ENCODE measurements at regions of chr6 and their contacts with region 1.

Region 1: DNA sequence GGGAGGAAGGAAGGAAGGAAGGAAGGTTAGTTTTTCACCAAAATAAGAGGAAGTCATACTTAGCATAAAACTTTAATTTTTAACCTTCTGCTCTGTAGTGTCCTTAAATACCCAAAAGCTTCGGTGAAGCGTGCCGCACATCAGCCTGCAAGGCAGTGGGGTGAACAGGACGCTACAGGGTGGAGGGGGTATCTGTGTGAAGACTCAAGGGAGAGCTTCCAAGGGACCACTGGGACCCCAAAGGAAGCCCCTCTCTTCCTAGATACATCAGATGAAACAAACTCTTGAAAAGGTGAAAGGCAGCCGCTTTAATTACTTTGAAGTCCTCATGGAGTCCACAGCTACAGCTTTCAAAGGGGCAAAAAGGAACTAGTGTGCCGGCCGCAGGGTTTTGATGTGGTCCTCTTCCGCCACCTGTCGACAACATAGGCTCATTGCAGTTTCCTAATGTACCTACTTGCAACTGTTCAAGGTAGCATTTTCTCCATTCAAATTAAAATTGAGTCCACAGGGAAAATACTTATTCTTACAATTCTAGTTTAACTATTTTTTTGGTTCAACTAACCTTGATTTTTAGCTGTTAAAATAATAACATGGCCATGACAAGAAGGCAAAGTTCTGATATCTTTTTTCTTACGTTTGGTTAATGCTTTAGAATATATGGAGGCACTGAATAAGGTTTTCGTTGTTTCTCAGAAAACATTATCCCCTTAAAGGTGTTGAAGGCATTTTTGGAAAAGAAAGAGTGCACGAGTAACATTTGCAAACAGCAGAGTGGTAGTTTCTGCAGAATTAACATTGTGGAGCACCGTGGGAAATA is 135.0 kb upstream of the RIPOR2 start:
- DNase-seq: peak; percentile 54 to 85 (median 79)
- ATAC-seq: peak; percentile 99
- H3K4me3 ChIP-seq: no peak overlapping the region
- H3K4me3 Mint-ChIP-seq: peak overlapping the region in 8 of 10 donors; percentile 10 to 70 (median 50)
- H3K27ac ChIP-seq: no peak overlapping the region
- H3K27ac Mint-ChIP-seq: peak overlapping the region; percentile 43 to 92 (median 83)
- H3K4me1 ChIP-seq: peaks cover 0 to 3% of the 10 kb centered on the region in 2 donors
- H3K4me1 Mint-ChIP-seq: peaks cover 5 to 15% (median 9%) of the 10 kb centered on the region in 7 donors
- H3K27me3 ChIP-seq: no peaks in the 10 kb centered on the region
- H3K27me3 Mint-ChIP-seq: peaks cover 0 to 7% (median 0%) of the 10 kb centered on the region in 5 donors

Region 2: GRCh38 chr6:23929201-23929600 is 1141.6 kb before region 1 on chr6:
- CTCF ChIA-PET with region 1: no interaction called
- POLR2A ChIA-PET with region 1: no interaction called
- intact Hi-C with region 1: no loop called
- DNase-seq: no peak
- ATAC-seq: no peak
- H3K4me3 ChIP-seq: no peak overlapping the region
- H3K4me3 Mint-ChIP-seq: no peak overlapping the region
- H3K27ac ChIP-seq: no peak overlapping the region
- H3K27ac Mint-ChIP-seq: no peak overlapping the region
- H3K4me1 ChIP-seq: no peaks in the 10 kb centered on the region
- H3K4me1 Mint-ChIP-seq: no peaks in the 10 kb centered on the region
- H3K27me3 ChIP-seq: no peaks in the 10 kb centered on the region
- H3K27me3 Mint-ChIP-seq: no peaks in the 10 kb centered on the region

Region 3: DNA sequence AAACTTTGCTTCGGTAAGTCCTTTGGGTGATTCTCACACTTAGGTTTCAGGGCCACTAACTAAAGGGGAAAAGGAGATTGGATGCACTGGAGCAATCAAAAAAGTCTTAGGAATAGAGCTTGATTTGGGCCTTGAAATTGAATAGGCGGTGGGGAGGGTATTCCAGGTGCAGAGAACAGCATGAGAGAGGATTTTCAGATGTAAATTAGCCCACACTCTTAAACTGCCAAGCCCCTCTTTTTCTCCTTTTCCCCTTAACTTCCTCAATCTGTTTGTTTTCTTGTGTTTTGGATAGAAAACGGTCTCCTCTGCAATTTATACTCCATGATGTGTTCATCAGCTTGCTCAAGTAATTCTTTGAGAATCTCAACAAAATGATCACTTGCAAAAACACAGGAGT is 72.9 kb before region 1 on chr6:
- CTCF ChIA-PET with region 1: no interaction called
- POLR2A ChIA-PET with region 1: no interaction called
- intact Hi-C with region 1: no loop called
- DNase-seq: no peak
- ATAC-seq: no peak
- H3K4me3 ChIP-seq: no peak overlapping the region
- H3K4me3 Mint-ChIP-seq: peak overlapping the region in 3 of 10 donors; percentile 3 to 59 (median 53)
- H3K27ac ChIP-seq: no peak overlapping the region
- H3K27ac Mint-ChIP-seq: peak overlapping the region in 6 of 9 donors; percentile 41 to 85 (median 74)
- H3K4me1 ChIP-seq: peaks cover 0 to 27% of the 10 kb centered on the region in 2 donors
- H3K4me1 Mint-ChIP-seq: peaks cover 32 to 79% (median 73%) of the 10 kb centered on the region in 7 donors
- H3K27me3 ChIP-seq: no peaks in the 10 kb centered on the region
- H3K27me3 Mint-ChIP-seq: no peaks in the 10 kb centered on the region

Region 4: DNA sequence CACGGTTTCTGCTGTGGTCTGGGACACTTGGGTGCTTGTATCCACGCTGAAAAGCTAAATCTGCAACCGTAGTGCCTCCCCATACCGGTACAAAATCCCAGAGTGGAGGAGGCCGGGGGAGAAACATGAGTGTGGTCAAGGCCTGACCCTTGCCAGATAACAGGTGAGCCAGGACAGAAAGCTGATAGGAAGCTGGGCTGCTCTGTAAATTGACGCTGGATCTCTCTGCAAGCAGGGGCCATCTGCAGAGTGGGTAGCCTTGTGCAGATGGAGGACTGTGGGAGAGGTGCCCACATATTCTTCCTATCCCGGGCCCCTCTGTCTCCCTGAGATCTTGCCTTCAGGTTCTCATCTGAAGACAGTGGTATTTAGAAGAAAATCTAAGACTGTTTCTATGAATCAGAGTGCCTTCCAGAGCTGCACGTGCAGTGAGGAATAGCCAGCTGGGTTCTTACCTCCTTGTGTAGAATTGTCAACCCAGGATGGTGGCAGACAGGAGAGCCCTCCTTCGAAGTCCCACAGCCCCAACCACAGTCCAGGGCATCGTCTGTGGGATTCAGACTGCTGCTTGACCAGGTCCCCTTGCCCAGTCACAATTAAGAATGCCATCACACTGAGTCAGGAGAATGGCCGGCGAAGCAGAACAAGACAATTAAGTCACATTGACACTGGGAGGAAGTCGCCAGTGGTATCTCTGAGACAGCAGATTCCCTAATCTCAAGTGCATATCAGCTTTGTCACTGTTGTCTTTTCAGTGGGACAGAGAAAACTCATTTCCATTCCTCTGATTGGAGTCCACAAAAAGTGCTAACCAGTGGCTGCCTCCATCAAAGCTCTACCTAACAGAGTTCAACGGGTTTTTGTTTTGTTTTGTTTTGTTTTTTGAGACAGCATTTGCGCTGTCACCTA is 35.0 kb before region 1 on chr6:
- CTCF ChIA-PET with region 1: interaction called, 14 read pairs
- POLR2A ChIA-PET with region 1: interaction called, 3 read pairs
- intact Hi-C with region 1: no loop called
- DNase-seq: no peak
- ATAC-seq: peak; percentile 76
- H3K4me3 ChIP-seq: peak overlapping the region; percentile 56
- H3K4me3 Mint-ChIP-seq: peak overlapping the region; percentile 73 to 92 (median 83)
- H3K27ac ChIP-seq: peak overlapping the region; percentile 54
- H3K27ac Mint-ChIP-seq: peak overlapping the region; percentile 71 to 93 (median 83)
- H3K4me1 ChIP-seq: peaks cover 33 to 46% of the 10 kb centered on the region in 2 donors
- H3K4me1 Mint-ChIP-seq: peaks cover 46 to 70% (median 66%) of the 10 kb centered on the region in 7 donors
- H3K27me3 ChIP-seq: no peaks in the 10 kb centered on the region
- H3K27me3 Mint-ChIP-seq: no peaks in the 10 kb centered on the region

Region 5: DNA sequence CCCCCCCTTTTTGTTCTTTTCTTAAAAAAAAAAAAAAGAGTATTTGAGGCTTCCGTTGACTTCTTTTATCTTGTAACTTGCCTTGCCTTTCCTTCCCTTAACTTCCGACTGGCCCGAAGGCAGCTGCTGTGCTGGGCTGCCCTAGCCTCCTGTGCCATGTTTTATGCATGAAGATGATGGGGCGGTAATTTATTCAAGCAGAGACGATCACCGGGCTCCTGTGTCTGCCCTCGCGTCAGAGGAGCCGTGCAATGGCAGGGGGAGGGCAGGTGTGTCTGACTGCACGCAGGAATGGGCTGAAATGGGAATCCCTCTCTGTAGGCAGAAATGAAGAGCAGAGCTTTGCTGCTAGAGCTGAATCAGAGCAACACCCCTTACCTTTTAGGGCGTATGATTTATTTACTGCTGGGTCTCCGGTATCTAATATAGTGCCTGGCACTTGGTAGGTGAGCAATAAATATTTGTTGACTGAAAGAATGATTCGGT is 28.7 kb before region 1 on chr6:
- CTCF ChIA-PET with region 1: interaction called, 27 read pairs
- POLR2A ChIA-PET with region 1: interaction called, 4 read pairs
- intact Hi-C with region 1: loop called (anchors 1 kb)
- DNase-seq: peak in 7 of 9 donors; percentile 45 to 67 (median 49)
- ATAC-seq: peak; percentile 73
- H3K4me3 ChIP-seq: peak overlapping the region; percentile 60
- H3K4me3 Mint-ChIP-seq: peak overlapping the region; percentile 88 to 97 (median 92)
- H3K27ac ChIP-seq: peak overlapping the region; percentile 64
- H3K27ac Mint-ChIP-seq: peak overlapping the region; percentile 71 to 98 (median 90)
- H3K4me1 ChIP-seq: peaks cover 35 to 51% of the 10 kb centered on the region in 2 donors
- H3K4me1 Mint-ChIP-seq: peaks cover 38 to 62% (median 56%) of the 10 kb centered on the region in 7 donors
- H3K27me3 ChIP-seq: no peaks in the 10 kb centered on the region
- H3K27me3 Mint-ChIP-seq: peaks cover 0 to 3% (median 0%) of the 10 kb centered on the region in 5 donors

Measured in naive thymus-derived CD4-positive, alpha-beta T cell (primary cell).